Activated CD4-positive, alpha-beta memory T cell treated with anti-CD3 and anti-CD28 coated beads, Interleukin-2, amount 10 ng/mL, durations not matched to agents 7 days and 5 days (primary cell): ENCODE measurements at regions of chr14 and their contacts with region 1.

Region 1: DNA sequence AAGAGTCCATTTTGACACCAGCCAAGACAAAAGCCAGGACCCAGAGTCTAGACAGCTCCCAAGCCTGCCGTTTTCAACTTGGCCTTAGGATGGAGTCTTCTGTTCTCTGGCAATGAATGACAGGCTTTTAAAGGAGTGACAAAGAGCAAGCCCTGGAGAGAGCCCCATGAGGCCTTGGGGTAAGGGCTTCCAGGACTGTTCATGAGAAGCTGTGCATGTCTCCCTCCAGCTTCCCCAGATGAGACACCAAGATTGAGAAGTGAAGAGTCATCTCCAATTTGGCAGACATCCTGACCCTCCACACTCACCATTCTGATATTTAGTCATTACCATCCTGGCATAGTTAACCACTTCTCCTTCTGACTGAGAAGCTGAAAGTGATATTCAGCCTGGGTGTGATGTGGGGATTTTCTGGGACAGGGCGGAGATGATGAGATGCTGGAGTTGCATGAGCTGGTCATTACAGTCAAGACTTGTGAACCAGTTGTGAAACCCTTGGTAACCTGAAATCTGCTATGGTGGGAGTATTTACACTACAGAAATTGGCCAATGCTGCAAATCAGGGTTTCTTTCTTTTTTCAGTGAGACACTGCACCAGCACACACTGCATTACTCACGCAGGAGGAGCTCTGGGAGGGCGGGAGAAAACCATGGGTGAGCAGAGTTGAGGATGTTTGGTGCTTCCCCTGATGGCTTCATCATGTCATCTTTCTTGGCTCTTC is 77.8 kb downstream of the VCPKMT start:
- DNase-seq: peak; percentile 70
- H3K4me3 Mint-ChIP-seq: peak overlapping the region; percentile 79
- H3K27ac Mint-ChIP-seq: peak overlapping the region; percentile 98
- H3K4me1 Mint-ChIP-seq: peaks cover 83% of the 10 kb centered on the region
- H3K27me3 Mint-ChIP-seq: no peaks in the 10 kb centered on the region

Region 2: GRCh38 chr14:49808780-49809179 is 229.8 kb before region 1 on chr14:
- CTCF ChIA-PET with region 1: no interaction called
- POLR2A ChIA-PET with region 1: no interaction called
- DNase-seq: no peak
- H3K4me3 Mint-ChIP-seq: no peak overlapping the region
- H3K27ac Mint-ChIP-seq: no peak overlapping the region
- H3K4me1 Mint-ChIP-seq: peaks cover 7% of the 10 kb centered on the region
- H3K27me3 Mint-ChIP-seq: no peaks in the 10 kb centered on the region

Region 3: GRCh38 chr14:50025776-50026175 is 12.8 kb before region 1 on chr14:
- CTCF ChIA-PET with region 1: interaction called, 3 read pairs
- POLR2A ChIA-PET with region 1: interaction called, 10 read pairs
- DNase-seq: no peak
- H3K4me3 Mint-ChIP-seq: no peak overlapping the region
- H3K27ac Mint-ChIP-seq: no peak overlapping the region
- H3K4me1 Mint-ChIP-seq: peaks cover 22% of the 10 kb centered on the region
- H3K27me3 Mint-ChIP-seq: no peaks in the 10 kb centered on the region